ENCODE measurements at regions of chr1 and their contacts with region 1.

Region 1: DNA sequence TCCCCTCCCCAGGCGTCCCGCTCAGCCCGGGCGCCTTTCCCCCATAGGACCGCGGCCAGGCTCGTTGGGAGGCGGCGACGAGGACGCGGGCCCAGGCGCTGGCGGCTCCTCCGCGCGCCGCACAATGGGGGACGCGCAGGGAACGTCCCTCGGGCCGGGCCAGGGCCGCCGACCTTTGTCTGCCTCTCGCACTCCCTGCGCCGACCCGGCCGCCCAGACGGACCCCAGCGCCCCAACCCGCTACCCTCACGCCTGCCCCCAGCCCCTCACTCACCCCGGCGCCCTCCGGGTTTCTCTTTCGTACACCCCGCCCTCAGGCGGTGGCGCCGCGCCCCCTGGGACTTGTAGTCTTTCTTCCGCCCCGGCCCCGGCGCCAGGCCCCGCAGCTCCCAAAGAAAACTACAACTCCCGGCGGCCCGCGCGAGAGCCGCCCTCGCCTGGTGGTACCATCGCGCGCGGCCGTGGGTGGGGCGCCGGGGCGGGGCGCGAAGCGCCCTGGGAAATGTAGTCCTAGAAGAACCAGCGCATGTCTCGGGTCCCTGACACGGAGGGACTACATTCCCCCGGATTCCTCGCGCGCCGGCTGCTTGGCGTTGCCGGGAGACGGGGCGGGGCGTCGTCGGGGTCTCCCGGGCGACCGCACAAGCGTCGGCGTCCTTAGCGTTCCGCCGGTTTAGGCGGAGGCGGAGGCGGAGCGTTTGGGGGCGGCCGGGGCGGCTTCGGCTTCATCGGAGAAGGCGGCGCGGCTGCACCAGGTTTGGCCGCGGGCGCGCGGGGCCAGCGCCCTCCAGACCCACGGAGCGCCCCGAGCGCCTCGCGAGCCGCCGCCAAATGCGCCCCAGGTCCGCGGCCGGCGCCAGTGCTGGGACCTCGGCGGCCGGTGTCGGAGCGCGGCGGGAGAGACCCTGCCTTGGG is at the start of gene C1orf159:
- DNase-seq: peak; percentile 97 to 100
- H3K4me3 ChIP-seq: peak within 1 kb of the TSS; percentile 65 to 100
- H3K27ac ChIP-seq: peak within 1 kb of the TSS; percentile 35 to 63
- H3K4me1 ChIP-seq: peaks cover 4 to 7% of the 10 kb centered on the region in 2 donors
- H3K27me3 ChIP-seq: no peaks in the 10 kb centered on the region
- CTCF ChIP-seq: no peak
- total RNA-seq, gene C1orf159: 23.7 TPM

Region 2: GRCh38 chr1:999725-1000356 is 116.2 kb before region 1 on chr1 and contains the start of gene HES4:
- intact Hi-C with region 1: loop called (anchors 5 kb)
- DNase-seq: peak; percentile 67 to 96
- H3K4me3 ChIP-seq: peak within 1 kb of the TSS; percentile 58 to 68
- H3K27ac ChIP-seq: peak within 1 kb of the TSS; percentile 98
- H3K4me1 ChIP-seq: peaks cover 17 to 19% of the 10 kb centered on the region in 2 donors
- H3K27me3 ChIP-seq: no peaks in the 10 kb centered on the region
- CTCF ChIP-seq: peak in 1 of 3 experiments; percentile 7
- total RNA-seq, gene HES4: 285 TPM

Region 3: GRCh38 chr1:1231400-1232223 is 115.6 kb after region 1 on chr1 and contains the start of gene SDF4:
- intact Hi-C with region 1: loop called (anchors 1 kb)
- DNase-seq: peak; percentile 77 to 98
- H3K4me3 ChIP-seq: peak within 1 kb of the TSS; percentile 91 to 95
- H3K27ac ChIP-seq: peak within 1 kb of the TSS; percentile 89 to 94
- H3K4me1 ChIP-seq: peaks cover 23% of the 10 kb centered on the region in 2 donors
- H3K27me3 ChIP-seq: no peaks in the 10 kb centered on the region
- CTCF ChIP-seq: no peak
- total RNA-seq, gene SDF4: 223 TPM

Region 4: GRCh38 chr1:1291548-1292441 is 175.8 kb after region 1 on chr1:
- intact Hi-C with region 1: loop called (anchors 5 kb)
- DNase-seq: no peak
- H3K4me3 ChIP-seq: no peak overlapping the region
- H3K27ac ChIP-seq: no peak overlapping the region
- H3K4me1 ChIP-seq: peaks cover 3 to 4% of the 10 kb centered on the region in 2 donors
- H3K27me3 ChIP-seq: no peaks in the 10 kb centered on the region
- CTCF ChIP-seq: peak; percentile 35 to 57 (median 54)

Region 5: DNA sequence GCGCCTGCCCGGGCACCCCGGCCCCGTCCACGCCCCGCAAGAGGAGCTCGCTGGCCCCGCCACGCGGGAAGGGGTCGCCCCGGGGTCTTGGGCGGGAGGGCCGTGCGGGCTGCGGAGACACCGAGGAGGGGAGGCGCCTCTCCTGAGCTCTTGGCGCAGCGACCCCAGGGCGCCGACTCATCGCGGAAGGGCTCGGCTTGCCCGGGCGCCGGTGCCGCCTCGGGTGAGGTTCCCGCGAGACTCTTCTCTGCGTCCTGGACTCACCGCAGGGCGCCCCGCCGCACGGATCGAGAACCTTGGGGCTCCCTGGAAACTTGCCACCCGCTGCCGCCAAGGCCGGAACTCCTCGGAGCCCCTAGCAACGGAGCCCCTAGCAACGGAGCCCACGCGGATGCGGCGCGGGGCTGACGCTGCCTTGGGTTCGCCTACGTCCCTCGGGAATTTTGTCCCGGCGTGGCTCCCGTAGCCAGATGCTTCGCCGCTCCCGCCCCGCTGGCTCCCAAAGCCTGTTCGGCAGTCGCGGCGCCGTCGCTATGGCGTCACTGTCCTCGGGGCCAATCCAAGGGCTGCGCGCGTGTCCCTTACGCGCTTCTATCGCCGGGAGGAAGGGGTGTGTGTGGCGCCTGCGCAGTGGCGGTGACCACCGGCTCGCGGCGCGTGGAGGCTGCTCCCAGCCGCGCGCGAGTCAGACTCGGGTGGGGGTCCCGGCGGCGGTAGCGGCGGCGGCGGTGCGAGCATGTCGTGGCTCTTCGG is 395.7 kb after region 1 on chr1 and contains the start of gene ATAD3A:
- intact Hi-C with region 1: loop called (anchors 5 kb)
- DNase-seq: peak; percentile 89 to 99
- H3K4me3 ChIP-seq: peak within 1 kb of the TSS; percentile 81
- H3K27ac ChIP-seq: peak within 1 kb of the TSS; percentile 85 to 93
- H3K4me1 ChIP-seq: peaks cover 0 to 7% of the 10 kb centered on the region in 2 donors
- H3K27me3 ChIP-seq: no peaks in the 10 kb centered on the region
- CTCF ChIP-seq: no peak
- total RNA-seq, gene ATAD3A: 46.3 TPM